PC-3 (cell line): ENCODE measurements at regions of chr2 and their contacts with region 1.

Region 1: DNA sequence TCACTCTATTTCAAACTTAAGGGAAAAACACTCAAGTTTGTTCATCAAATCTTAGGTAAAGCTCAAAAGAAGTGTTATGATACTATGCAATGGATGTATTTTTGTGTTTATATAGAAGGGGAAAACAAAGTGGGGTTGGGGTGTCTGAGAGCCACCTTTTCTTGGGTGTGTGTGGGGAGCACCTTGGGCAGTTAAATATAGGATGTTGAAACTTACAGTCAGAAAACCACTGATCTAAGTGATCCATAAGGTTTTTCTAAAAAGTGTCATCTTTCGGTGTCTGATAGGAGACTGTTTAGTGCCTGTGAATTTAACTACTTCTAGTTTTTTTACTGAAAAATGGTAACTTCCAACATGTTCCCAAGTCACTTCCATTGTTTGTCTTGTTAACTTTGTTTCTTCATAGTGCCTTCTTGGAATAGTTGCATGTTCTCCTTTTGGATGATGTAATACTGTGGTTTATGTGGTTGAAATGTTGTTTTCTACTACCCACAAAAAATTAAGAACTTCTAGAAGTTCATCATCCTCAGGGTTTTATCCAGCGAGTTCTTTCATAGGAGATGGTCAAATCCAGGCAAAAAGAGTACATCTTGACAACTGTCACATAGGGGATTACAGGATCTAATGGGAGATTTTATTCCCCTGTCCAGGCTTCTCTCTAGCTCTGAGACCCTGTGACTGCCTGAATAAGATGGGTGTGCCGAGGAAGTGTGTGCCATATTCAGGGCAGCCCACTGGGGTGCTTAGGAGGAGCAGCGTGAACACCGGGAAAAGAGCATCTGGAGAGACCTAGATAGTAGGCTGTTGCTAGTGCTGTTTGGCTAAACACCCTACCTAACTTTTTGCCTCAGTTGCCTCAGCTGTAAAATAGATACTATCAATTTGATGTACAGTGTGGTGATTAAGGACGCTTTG is 46.2 kb downstream of the CAB39 start:
- DNase-seq: no peak
- ATAC-seq: no peak
- H3K4me3 ChIP-seq: no peak overlapping the region
- H3K27ac ChIP-seq: peak overlapping the region; percentile 12; the same call in 1 of the 2 replicates
- H3K4me1 ChIP-seq: peaks cover 35% of the 10 kb centered on the region
- H3K27me3 ChIP-seq: no peaks in the 10 kb centered on the region
- CTCF ChIP-seq: no peak

Region 2: GRCh38 chr2:230737791-230738226 is 21.0 kb before region 1 on chr2:
- CTCF ChIA-PET with region 1: no interaction called
- POLR2A ChIA-PET with region 1: interaction called, 3 read pairs
- intact Hi-C with region 1: loop called (anchors 1 kb)
- DNase-seq: peak; percentile 85
- ATAC-seq: peak; percentile 48
- H3K4me3 ChIP-seq: peak overlapping the region; percentile 53
- H3K27ac ChIP-seq: peak overlapping the region; percentile 95
- H3K4me1 ChIP-seq: peaks cover 60% of the 10 kb centered on the region
- H3K27me3 ChIP-seq: no peaks in the 10 kb centered on the region
- CTCF ChIP-seq: no peak

Region 3: GRCh38 chr2:230793572-230794359 is 34.9 kb after region 1 on chr2:
- CTCF ChIA-PET with region 1: no interaction called
- POLR2A ChIA-PET with region 1: no interaction called
- intact Hi-C with region 1: loop called (anchors 5 kb)
- DNase-seq: peak; percentile 96
- ATAC-seq: peak; percentile 90
- H3K4me3 ChIP-seq: peak overlapping the region; percentile 52
- H3K27ac ChIP-seq: peak overlapping the region; percentile 98
- H3K4me1 ChIP-seq: peaks cover 63% of the 10 kb centered on the region
- H3K27me3 ChIP-seq: no peaks in the 10 kb centered on the region
- CTCF ChIP-seq: no peak